Activated CD8-positive, alpha-beta T cell treated with anti-CD3 and anti-CD28 coated beads for 36 hours (primary cell): ENCODE measurements at regions of chr6 and their contacts with region 1.

Region 1: DNA sequence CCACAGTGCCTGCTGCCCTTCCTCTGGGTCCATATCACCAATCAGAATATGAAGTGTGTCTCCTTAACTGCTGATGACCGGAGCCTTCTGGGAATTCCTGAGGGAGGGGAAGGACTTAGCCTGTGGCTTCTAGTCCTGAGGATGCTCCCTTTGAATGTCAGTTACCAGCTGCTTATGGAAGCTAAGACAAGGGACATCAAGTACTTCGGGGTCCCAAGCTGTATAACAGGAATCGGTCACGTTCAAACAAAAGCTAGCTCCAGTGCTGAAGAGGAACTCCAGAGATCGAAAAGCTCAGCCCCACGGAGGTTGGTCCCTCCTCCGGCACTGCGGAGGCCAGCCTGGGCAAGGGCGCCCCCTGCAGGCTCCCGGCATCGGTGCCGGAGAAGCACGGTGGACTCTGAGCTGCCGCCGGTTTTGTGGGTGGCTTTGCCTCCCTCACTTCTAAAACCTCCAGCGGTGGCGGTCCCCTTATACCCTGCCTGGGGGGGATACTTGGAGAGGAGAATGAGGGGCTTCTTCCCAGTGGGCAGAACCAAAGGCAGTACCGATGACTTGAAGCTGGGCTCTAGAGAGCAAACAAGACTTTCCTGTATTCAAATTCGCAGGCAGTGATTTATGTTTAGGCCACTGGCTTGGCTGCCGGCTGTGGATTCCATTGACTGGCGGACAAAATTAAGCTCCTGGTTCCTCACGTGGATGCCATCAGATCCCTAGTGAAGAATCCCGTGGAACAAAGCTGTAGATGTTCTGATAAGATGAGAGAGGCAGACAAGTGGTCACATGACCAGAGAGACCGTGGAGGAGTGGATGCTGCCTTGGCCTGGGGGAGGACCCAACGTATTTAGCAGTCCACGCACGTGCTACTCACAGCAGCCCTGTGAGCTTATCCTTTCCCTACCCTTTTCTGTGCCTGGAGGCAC is 16.2 kb upstream of the UBR2 start:
- DNase-seq: peak; percentile 90
- ATAC-seq: peak; percentile 99
- H3K4me3 Mint-ChIP-seq: peak overlapping the region; percentile 64
- H3K27ac Mint-ChIP-seq: no peak overlapping the region
- H3K4me1 Mint-ChIP-seq: peaks cover 13% of the 10 kb centered on the region
- H3K27me3 Mint-ChIP-seq: peaks cover 10% of the 10 kb centered on the region
- CTCF ChIP-seq: peak; percentile 97

Region 2: DNA sequence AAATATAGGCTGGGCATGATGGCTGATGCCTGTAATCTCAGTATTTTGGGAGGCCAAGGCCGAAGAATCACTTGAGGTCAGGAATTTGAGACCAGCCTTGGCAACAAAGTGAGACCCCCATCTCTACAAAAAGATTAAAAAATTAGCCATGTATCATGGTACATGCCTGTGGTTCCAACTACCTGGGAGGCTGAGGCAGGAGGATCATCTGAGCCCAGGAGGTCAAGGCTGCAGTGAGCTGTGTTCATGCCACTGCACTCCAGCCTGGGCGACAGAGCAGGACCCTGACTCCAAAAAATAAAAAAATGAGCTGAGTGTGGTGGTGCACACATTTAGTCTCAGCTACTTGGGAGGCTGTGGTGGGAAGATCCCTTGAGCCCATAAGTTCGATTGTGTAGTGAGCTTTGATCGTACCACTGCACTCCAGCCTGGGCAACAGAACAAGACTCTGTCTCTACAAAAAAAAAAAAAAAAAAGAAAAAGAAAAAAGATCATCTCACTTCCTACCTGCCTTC is 342.8 kb before region 1 on chr6:
- CTCF ChIA-PET with region 1: interaction called, 11 read pairs
- POLR2A ChIA-PET with region 1: no interaction called
- intact Hi-C with region 1: no loop called
- DNase-seq: no peak
- ATAC-seq: no peak
- H3K4me3 Mint-ChIP-seq: no peak overlapping the region
- H3K27ac Mint-ChIP-seq: no peak overlapping the region
- H3K4me1 Mint-ChIP-seq: peaks cover 3% of the 10 kb centered on the region
- H3K27me3 Mint-ChIP-seq: no peaks in the 10 kb centered on the region
- CTCF ChIP-seq: no peak

Region 3: GRCh38 chr6:42269553-42269952 is 278.1 kb before region 1 on chr6:
- CTCF ChIA-PET with region 1: interaction called, 126 read pairs
- POLR2A ChIA-PET with region 1: no interaction called
- intact Hi-C with region 1: loop called (anchors 5 kb)
- DNase-seq: peak; percentile 76
- ATAC-seq: peak; percentile 92
- H3K4me3 Mint-ChIP-seq: no peak overlapping the region
- H3K27ac Mint-ChIP-seq: peak overlapping the region; percentile 83
- H3K4me1 Mint-ChIP-seq: peaks cover 17% of the 10 kb centered on the region
- H3K27me3 Mint-ChIP-seq: no peaks in the 10 kb centered on the region
- CTCF ChIP-seq: no peak

Region 4: DNA sequence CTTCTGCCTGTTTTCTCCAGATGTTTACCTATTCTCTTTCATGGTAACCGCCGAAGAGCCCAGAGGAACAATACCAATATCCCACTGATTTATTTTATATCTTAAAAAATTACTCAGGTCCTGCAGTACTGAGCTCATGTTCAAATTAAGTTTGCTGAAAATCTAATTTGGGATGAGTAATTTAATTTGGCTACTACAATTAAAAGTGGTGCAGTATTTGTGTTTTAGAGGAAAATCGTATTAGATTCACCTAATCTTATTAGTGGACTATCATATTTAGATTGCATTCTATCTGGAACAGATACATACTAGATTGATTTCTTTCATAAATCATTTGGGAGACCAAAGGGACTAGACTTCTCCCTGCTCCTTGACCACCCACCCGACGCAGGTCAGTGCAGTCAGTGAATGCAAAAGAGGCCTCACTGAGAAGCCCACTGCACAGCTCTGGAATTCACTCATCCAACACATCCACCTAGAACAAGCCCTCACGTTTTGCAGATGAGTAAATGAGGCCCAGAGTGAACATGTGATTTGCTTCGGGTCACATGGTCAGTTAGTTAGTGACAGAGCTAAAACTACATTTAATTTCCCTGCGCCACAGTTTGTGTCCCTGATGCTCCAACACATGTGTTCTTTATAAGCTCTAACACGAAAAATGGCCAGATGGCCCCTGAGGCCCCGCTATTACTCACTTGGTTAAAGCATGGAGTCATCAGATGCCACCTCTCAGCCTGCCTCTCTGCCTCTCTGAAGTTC is 197.7 kb before region 1 on chr6:
- CTCF ChIA-PET with region 1: interaction called, 10 read pairs
- POLR2A ChIA-PET with region 1: no interaction called
- intact Hi-C with region 1: no loop called
- DNase-seq: no peak
- ATAC-seq: no peak
- H3K4me3 Mint-ChIP-seq: no peak overlapping the region
- H3K27ac Mint-ChIP-seq: no peak overlapping the region
- H3K4me1 Mint-ChIP-seq: peaks cover 23% of the 10 kb centered on the region
- H3K27me3 Mint-ChIP-seq: no peaks in the 10 kb centered on the region
- CTCF ChIP-seq: no peak

Region 5: DNA sequence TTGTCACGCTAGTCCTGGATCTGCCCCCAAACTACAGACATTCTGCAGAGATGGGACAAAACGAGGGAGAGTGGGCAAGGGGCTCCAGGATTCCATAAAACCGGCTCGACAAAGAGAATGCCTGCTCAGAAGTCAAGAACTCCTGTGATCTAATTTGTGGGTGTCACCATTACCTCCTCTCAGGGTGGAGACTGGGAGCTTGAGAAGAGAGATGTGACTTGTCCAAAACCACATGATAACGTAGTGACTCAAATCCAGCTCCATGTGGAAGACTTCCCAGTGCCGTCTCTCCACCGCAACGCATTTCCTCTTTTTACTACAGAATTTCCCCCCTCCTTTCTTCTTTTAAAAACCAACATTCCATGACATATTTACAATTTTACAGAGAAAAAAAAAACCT is 140.3 kb before region 1 on chr6:
- CTCF ChIA-PET with region 1: interaction called, 15 read pairs
- POLR2A ChIA-PET with region 1: no interaction called
- intact Hi-C with region 1: no loop called
- DNase-seq: no peak
- ATAC-seq: no peak
- H3K4me3 Mint-ChIP-seq: no peak overlapping the region
- H3K27ac Mint-ChIP-seq: peak overlapping the region; percentile 35
- H3K4me1 Mint-ChIP-seq: peaks cover 68% of the 10 kb centered on the region
- H3K27me3 Mint-ChIP-seq: no peaks in the 10 kb centered on the region
- CTCF ChIP-seq: no peak

Region 6: DNA sequence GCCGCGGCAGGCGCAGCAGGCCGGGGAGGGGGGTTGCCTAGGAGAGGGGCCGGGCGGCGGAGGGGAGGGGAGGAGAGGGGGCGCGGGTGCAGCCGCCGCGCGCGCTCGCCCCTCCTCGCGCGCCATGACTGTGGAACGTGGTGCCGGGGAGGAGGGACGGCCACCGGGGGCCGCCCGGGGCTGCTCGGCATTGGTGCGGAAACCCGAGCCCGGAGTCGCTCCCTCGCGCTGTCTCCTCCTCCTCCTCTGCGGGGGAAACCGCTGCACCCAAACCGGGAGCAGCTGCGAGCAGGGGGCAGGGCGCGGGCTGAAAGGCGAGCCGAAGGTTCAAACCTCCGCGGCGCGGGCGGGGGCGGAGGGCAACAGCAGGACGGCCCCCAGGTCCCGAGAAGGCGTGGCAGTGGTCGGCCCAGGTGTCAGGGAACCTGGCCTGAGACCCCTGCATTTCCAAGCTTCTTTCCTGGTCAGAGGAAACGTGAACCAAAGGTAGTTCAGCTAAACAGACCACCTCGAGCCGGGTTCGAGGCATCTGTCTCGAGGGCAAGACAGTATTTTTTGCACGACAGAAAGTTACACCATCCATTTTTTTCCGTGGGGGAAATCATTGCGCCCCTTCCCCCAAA is 94.5 kb before region 1 on chr6:
- CTCF ChIA-PET with region 1: interaction called, 56 read pairs
- POLR2A ChIA-PET with region 1: interaction called, 6 read pairs
- intact Hi-C with region 1: no loop called
- DNase-seq: peak; percentile 82
- ATAC-seq: peak; percentile 72
- H3K4me3 Mint-ChIP-seq: peak overlapping the region; percentile 97
- H3K27ac Mint-ChIP-seq: peak overlapping the region; percentile 85
- H3K4me1 Mint-ChIP-seq: peaks cover 34% of the 10 kb centered on the region
- H3K27me3 Mint-ChIP-seq: peaks cover 4% of the 10 kb centered on the region
- CTCF ChIP-seq: no peak

Region 7: GRCh38 chr6:42511803-42512422 is 35.8 kb before region 1 on chr6:
- CTCF ChIA-PET with region 1: interaction called, 37 read pairs
- POLR2A ChIA-PET with region 1: no interaction called
- intact Hi-C with region 1: no loop called
- DNase-seq: no peak
- ATAC-seq: no peak
- H3K4me3 Mint-ChIP-seq: no peak overlapping the region
- H3K27ac Mint-ChIP-seq: no peak overlapping the region
- H3K4me1 Mint-ChIP-seq: no peaks in the 10 kb centered on the region
- H3K27me3 Mint-ChIP-seq: no peaks in the 10 kb centered on the region
- CTCF ChIP-seq: no peak